OCI-LY7 (cell line): ENCODE measurements at regions of chr13 and their contacts with region 1.

Region 1: GRCh38 chr13:40388617-40389016 is 277.8 kb downstream of the FOXO1 start:
- DNase-seq: peak; percentile 96
- H3K4me3 ChIP-seq: peak overlapping the region; percentile 66
- H3K27ac ChIP-seq: peak overlapping the region; percentile 67
- H3K4me1 ChIP-seq: peaks cover 44% of the 10 kb centered on the region
- CTCF ChIP-seq: no peak

Region 2: DNA sequence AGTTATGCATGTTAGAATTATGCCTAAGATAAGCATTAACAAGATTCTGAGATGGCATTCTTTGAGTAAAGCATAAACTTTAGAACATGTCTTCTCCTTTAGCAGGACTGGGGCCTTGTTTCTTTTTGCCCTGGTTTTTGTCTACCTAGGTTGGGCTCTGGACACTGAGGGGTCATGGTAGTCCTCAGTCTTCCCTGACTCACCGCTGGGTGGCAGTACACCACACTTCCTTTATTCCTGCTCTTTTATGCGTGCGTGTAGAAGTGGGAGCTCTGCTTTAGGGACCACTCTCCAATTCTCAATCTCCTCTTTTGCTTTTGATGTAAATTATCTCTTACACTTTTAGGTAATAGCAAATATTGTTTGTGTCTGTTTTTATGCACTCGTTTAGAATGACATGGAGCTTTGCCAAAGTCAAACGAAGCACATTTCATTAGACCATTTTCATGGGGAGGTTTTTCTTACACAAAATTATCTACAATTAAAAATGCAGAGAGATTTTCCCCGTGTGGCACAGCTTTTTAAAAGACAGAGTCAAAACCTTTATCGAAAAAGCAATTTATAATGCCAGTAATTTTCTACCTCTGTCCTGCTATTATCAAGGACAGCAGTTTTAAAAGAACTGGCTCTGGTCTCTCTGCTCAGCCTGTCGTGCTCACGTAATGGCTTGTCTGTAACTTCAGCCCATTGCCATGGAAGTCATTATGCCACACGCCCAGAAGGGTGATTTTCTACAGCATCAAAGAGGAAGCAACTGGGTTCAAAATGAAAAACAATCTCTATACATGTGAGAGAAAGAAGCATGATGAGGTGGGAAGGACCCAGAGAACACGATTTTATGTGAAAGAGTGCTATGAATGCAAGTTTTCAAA is 319.2 kb before region 1 on chr13:
- CTCF ChIA-PET with region 1: no interaction called
- POLR2A ChIA-PET with region 1: no interaction called
- intact Hi-C with region 1: loop called (anchors 5 kb)
- DNase-seq: peak; percentile 81
- H3K4me3 ChIP-seq: no peak overlapping the region
- H3K27ac ChIP-seq: no peak overlapping the region
- H3K4me1 ChIP-seq: peaks cover 24% of the 10 kb centered on the region
- CTCF ChIP-seq: peak; percentile 98

Region 3: DNA sequence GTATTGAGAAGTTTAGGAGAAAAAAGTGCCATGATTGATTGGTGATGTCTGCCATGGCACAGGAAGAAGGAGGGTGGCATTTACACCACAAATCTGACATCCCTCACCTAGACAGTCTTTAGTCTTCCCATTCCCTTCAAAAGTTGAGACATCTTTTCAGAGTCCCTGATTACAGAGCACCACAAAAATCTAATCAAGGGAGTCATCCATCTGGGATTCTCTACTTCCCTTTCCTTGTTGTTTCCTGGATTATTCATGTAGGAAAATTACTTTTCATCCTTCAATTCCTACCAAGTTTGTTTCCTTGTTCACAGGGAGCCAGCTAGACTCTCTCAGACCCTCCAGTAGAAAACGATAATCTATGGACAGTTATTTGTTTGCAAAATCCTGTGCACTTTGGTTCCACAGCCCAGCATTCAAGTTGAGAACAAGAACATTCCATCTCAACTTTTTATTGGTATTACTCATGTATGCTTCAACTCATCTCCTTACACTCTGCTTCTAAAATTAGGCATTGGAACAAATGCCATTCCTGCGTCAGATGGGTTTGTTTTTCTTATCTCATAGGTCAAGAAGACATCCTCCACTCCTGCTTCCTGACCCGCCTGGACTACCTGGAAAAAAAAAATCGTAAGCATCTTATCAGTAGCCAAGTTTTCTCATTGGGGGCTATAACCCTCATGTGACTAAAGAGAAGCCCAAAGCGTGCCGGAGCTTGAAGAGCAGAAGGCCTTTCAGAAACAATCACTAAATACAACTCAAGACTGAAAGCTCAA is 18.0 kb after region 1 on chr13:
- CTCF ChIA-PET with region 1: no interaction called
- POLR2A ChIA-PET with region 1: interaction called, 10 read pairs
- intact Hi-C with region 1: no loop called
- DNase-seq: no peak
- H3K4me3 ChIP-seq: no peak overlapping the region
- H3K27ac ChIP-seq: no peak overlapping the region
- H3K4me1 ChIP-seq: peaks cover 16% of the 10 kb centered on the region
- CTCF ChIP-seq: no peak

Region 4: DNA sequence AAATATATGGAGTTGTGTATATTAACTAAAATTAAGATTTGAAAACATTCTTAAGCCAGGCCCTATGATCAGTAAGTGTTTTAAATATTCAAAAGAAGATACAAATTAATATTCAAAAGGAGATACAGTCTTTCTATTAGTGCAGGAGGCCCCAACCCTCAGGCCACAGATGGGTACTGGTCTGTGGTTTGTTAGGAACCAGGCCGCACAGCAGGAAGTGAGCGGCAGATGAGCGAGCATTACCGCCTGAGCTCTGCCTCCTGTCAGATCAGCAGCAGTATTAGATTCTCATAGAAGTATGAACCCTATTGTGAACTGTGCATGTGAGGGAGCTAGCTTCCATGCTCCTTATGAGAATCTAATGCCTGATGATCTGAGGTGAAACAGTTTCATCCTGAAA is 45.0 kb after region 1 on chr13:
- CTCF ChIA-PET with region 1: no interaction called
- POLR2A ChIA-PET with region 1: interaction called, 7 read pairs
- intact Hi-C with region 1: loop called (anchors 1 kb)
- DNase-seq: peak; percentile 86
- H3K4me3 ChIP-seq: no peak overlapping the region
- H3K27ac ChIP-seq: peak overlapping the region; percentile 98
- H3K4me1 ChIP-seq: peaks cover 91% of the 10 kb centered on the region
- CTCF ChIP-seq: no peak

Region 5: DNA sequence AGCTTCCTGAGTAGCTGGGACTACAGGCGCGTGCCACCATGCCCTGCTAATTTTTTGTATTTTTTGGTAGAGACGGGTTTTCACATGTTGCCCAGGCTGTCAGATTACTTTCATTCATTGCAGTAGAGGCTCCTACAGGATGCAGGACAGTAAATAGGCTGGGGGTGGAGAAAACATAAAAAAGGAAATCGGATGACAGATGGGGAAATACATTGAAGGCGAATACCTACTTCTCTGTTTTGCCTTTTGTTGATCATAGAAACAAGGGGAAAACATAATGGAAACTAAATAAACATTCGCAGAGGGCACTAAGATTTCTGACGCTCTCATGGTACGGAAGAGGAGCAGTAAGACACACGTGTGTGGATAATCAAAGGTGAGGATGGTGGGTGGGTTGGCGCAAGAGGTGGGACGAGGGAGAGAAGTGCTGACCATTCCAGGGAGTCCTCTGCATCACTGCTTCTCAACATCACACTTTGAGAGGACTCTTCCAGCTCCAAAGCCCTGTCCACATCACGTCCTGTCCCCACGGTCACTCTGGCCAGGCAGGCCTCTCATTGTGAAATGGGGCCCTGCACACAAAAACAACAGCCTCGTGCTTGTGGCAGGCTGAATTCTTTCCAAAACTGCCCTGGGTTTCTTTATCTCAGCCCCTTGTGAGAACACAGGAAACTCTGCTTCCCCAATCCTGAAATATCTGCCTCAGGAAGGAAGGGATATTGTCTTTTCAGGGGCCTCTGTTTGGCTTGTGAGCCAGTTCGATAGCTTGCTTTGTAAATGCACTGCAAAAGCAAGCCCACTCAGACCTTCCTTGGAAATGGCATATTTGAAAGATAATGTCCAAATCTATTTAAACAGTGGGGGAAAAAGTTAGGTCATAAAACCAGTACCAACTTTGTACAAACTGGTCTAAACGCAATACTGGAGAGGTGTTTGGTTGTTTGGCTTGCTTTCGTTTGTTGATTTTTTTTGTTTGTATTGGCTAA is 89.3 kb after region 1 on chr13:
- CTCF ChIA-PET with region 1: no interaction called
- POLR2A ChIA-PET with region 1: no interaction called
- intact Hi-C with region 1: loop called (anchors 2 kb)
- DNase-seq: peak; percentile 54
- H3K4me3 ChIP-seq: peak overlapping the region; percentile 67
- H3K27ac ChIP-seq: peak overlapping the region; percentile 96
- H3K4me1 ChIP-seq: peaks cover 83% of the 10 kb centered on the region
- CTCF ChIP-seq: no peak

Region 6: DNA sequence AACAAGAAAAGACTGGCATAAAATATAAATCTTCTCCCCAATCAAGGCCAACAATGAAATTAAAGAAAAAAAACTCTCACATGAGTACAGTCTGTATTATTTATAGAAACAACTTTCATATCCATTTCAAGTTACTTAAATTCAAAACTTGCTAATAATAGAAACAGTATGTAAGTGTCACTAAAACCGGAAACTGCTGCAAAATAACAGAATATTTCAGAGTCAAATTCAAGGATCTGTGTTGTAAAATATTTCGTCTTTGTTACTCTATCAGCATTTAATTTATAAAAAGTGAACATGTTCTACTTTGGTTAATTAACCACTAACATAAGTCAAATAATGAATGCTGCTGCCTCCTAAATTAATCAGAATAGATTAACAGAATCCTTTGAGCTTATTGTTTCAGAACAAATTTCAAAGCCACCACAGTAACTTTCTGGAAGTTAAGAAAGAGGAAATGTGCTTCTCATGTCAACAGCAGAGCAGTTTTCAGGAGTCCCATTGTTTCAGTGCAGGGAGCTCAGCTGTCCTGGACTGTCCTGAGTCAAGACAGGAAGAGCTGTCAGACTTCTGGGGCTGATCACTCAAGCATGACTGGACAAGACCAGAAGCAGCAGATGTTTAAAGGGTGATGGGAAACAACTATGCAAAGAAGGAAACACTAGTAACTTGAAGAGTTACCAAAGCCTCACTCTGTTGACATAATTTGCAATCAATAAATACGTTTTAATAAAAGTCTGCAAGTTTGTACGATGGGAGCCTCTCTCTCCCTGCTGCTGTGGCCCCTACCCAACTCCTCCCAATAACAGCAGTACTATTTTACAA is 200.9 kb after region 1 on chr13:
- CTCF ChIA-PET with region 1: no interaction called
- POLR2A ChIA-PET with region 1: no interaction called
- intact Hi-C with region 1: loop called (anchors 5 kb)
- DNase-seq: peak; percentile 97
- H3K4me3 ChIP-seq: peak overlapping the region; percentile 63
- H3K27ac ChIP-seq: peak overlapping the region; percentile 92
- H3K4me1 ChIP-seq: peaks cover 97% of the 10 kb centered on the region
- CTCF ChIP-seq: no peak

Region 7: GRCh38 chr13:40777166-40777808 is 388.7 kb after region 1 on chr13:
- CTCF ChIA-PET with region 1: no interaction called
- POLR2A ChIA-PET with region 1: no interaction called
- intact Hi-C with region 1: loop called (anchors 5 kb)
- DNase-seq: peak; percentile 86
- H3K4me3 ChIP-seq: peak overlapping the region; percentile 48
- H3K27ac ChIP-seq: peak overlapping the region; percentile 59
- H3K4me1 ChIP-seq: peaks cover 51% of the 10 kb centered on the region
- CTCF ChIP-seq: peak; percentile 99